Activated CD4-positive, alpha-beta T cell treated with anti-CD3 and anti-CD28 coated beads for 36 hours (primary cell): ENCODE measurements at regions of chr7 and their contacts with region 1.

Region 1: GRCh38 chr7:142412551-142413193 is 154.8 kb upstream of the PRSS58 start:
- DNase-seq: peak; percentile 67
- ATAC-seq: peak; percentile 91
- H3K4me3 Mint-ChIP-seq: no peak overlapping the region
- H3K27ac Mint-ChIP-seq: peak overlapping the region; percentile 16
- H3K4me1 Mint-ChIP-seq: peaks cover 2% of the 10 kb centered on the region
- H3K27me3 Mint-ChIP-seq: no peaks in the 10 kb centered on the region

Region 2: GRCh38 chr7:141960687-141961422 is 451.8 kb before region 1 on chr7:
- CTCF ChIA-PET with region 1: no interaction called
- POLR2A ChIA-PET with region 1: no interaction called
- intact Hi-C with region 1: no loop called
- DNase-seq: no peak
- ATAC-seq: no peak
- H3K4me3 Mint-ChIP-seq: no peak overlapping the region
- H3K27ac Mint-ChIP-seq: no peak overlapping the region
- H3K4me1 Mint-ChIP-seq: peaks cover 3% of the 10 kb centered on the region
- H3K27me3 Mint-ChIP-seq: peaks cover 3% of the 10 kb centered on the region

Region 3: GRCh38 chr7:142401951-142402350 is 10.7 kb before region 1 on chr7:
- CTCF ChIA-PET with region 1: interaction called, 11 read pairs
- POLR2A ChIA-PET with region 1: no interaction called
- intact Hi-C with region 1: no loop called
- DNase-seq: no peak
- ATAC-seq: no peak
- H3K4me3 Mint-ChIP-seq: no peak overlapping the region
- H3K27ac Mint-ChIP-seq: no peak overlapping the region
- H3K4me1 Mint-ChIP-seq: no peaks in the 10 kb centered on the region
- H3K27me3 Mint-ChIP-seq: peaks cover 2% of the 10 kb centered on the region

Region 4: DNA sequence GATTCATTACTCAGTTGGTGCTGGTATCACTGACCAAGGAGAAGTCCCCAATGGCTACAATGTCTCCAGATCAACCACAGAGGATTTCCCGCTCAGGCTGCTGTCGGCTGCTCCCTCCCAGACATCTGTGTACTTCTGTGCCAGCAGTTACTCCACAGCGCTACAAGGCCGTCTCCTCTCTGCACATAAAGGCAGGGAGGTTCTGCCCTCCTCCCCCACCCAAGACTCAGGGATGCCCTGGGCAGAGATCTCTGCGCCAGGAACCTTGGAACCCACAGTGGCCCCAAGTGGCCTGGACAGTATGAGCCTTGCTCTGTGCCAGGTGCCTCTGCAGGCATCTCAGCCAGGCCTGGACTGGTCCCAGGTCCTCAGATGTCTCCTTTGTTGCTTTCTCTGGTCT is 38.6 kb after region 1 on chr7:
- CTCF ChIA-PET with region 1: no interaction called
- POLR2A ChIA-PET with region 1: no interaction called
- intact Hi-C with region 1: no loop called
- DNase-seq: no peak
- ATAC-seq: no peak
- H3K4me3 Mint-ChIP-seq: no peak overlapping the region
- H3K27ac Mint-ChIP-seq: no peak overlapping the region
- H3K4me1 Mint-ChIP-seq: peaks cover 18% of the 10 kb centered on the region
- H3K27me3 Mint-ChIP-seq: no peaks in the 10 kb centered on the region

Region 5: DNA sequence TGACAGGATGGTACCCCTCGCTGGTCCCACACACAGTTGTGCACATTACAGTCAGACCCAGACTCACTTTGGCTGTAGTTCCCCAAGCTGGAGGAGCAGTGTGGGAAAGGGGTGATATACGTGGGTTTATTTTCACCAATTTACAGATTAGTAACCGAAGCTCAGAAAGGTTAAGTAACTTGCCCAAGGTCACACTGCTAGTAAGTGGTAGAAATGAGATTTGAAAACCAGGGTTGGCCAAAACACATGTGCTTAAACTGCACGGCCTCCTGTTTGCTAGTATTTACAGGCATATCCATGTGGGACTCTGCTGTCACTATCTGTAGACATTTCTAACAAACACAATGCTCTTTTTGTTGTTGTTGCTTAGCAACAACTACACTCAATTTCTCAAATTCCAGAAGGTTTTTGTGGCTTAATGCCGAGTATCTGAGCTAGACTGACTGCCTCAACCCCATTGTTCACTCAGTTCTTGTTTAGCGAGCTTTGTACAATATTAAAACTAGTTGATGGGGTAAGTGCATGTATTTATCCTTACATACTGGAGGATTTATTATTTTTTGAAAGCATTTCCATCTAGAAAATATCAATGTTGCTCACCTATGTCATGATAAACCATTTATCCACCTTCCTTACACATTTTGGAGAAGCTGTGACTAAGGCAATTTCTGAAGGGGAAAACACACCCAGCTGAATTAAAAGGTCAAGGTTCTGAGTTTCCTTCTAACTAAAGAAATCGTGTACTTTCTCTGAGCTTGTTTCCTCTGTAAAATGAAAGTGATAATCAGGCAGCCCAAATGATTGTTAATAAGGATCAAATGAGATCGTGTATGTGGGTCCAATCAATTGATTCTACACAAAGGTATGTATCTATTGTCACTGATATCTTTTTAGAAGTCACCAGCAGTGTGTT is 866.8 kb after region 1 on chr7:
- CTCF ChIA-PET with region 1: no interaction called
- POLR2A ChIA-PET with region 1: no interaction called
- intact Hi-C with region 1: no loop called
- DNase-seq: no peak
- ATAC-seq: peak; percentile 79
- H3K4me3 Mint-ChIP-seq: peak overlapping the region; percentile 49
- H3K27ac Mint-ChIP-seq: peak overlapping the region; percentile 90
- H3K4me1 Mint-ChIP-seq: peaks cover 38% of the 10 kb centered on the region
- H3K27me3 Mint-ChIP-seq: no peaks in the 10 kb centered on the region

Region 6: DNA sequence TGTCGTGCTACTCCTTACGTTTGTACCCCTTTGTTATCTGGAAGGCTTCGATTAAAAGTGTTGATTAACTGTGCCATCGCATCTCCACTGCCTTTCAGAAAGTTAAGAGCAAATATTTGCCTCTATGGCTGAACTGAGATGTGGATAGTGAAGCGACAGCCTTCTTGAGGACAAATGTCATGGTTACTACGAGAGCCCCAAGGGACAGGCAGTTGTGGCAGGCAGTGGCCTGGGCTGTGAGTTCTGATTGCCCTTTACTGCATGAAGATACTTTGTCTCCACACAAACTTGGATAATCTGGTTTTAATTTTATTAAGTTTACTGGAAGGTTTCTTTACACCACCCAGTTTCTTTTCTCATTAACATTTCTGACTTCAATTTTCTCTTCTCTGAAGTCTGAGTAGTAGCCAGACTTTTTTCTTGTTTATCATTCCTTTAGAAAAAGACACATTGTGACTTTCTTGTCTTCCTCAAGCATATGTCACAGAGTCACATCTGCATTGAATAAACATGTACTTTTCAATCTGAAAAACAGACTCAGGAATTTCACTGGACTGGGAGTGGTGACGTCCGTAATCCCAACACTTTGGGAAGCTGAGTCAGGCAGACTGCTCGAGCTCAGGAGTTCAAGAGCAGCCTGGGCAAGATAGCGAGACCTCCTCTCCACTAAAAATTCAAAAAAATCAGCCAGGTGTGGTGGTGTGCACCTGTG is 1066.5 kb after region 1 on chr7:
- CTCF ChIA-PET with region 1: no interaction called
- POLR2A ChIA-PET with region 1: no interaction called
- intact Hi-C with region 1: no loop called
- DNase-seq: no peak
- ATAC-seq: no peak
- H3K4me3 Mint-ChIP-seq: no peak overlapping the region
- H3K27ac Mint-ChIP-seq: no peak overlapping the region
- H3K4me1 Mint-ChIP-seq: peaks cover 28% of the 10 kb centered on the region
- H3K27me3 Mint-ChIP-seq: no peaks in the 10 kb centered on the region